Naive thymus-derived CD4-positive, alpha-beta T cell (primary cell): ENCODE measurements at regions of chr2 and their contacts with region 1.

Region 1: GRCh38 chr2:61854474-61855182 is 768 bp upstream of the FAM161A start:
- DNase-seq: peak; percentile 61 to 96 (median 94)
- ATAC-seq: peak; percentile 95
- H3K4me3 ChIP-seq: peak overlapping the region; percentile 100
- H3K4me3 Mint-ChIP-seq: peak overlapping the region; percentile 92 to 99 (median 96)
- H3K27ac ChIP-seq: peak overlapping the region; percentile 77
- H3K27ac Mint-ChIP-seq: peak overlapping the region; percentile 90 to 98 (median 95)
- H3K4me1 ChIP-seq: peaks cover 4 to 6% of the 10 kb centered on the region in 2 donors
- H3K4me1 Mint-ChIP-seq: peaks cover 10 to 27% (median 17%) of the 10 kb centered on the region in 7 donors
- H3K27me3 ChIP-seq: no peaks in the 10 kb centered on the region
- H3K27me3 Mint-ChIP-seq: no peaks in the 10 kb centered on the region

Region 2: DNA sequence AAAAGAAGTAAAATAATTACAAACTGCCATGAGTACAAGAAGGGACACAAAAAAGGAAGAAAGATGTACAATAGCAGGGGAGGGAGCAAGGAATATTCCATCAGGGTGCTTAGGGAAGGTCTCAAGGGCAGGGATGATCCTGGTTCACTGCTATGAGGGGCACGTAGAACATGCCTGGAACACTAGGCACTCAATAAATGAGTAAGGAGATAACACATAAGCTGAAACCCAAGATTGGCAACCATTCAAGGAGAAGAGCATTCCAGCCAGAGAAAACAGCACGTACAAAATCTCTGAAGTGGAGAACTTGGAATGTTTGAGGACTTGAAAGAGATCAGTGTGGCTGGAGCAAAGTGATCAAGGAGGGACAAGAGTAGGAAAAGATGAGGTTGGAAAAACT is 104.0 kb before region 1 on chr2:
- CTCF ChIA-PET with region 1: no interaction called
- POLR2A ChIA-PET with region 1: no interaction called
- intact Hi-C with region 1: no loop called
- DNase-seq: no peak
- ATAC-seq: no peak
- H3K4me3 ChIP-seq: no peak overlapping the region
- H3K4me3 Mint-ChIP-seq: no peak overlapping the region
- H3K27ac ChIP-seq: no peak overlapping the region
- H3K27ac Mint-ChIP-seq: no peak overlapping the region
- H3K4me1 ChIP-seq: no peaks in the 10 kb centered on the region
- H3K4me1 Mint-ChIP-seq: peaks cover 0 to 4% (median 0%) of the 10 kb centered on the region in 7 donors
- H3K27me3 ChIP-seq: no peaks in the 10 kb centered on the region
- H3K27me3 Mint-ChIP-seq: peaks cover 0 to 4% (median 4%) of the 10 kb centered on the region in 5 donors

Region 3: GRCh38 chr2:61905372-61906185 is 51.0 kb after region 1 on chr2 and contains the start of gene COMMD1:
- CTCF ChIA-PET with region 1: interaction called, 3 read pairs
- POLR2A ChIA-PET with region 1: interaction called, 6 read pairs
- intact Hi-C with region 1: loop called (anchors 1 to 5 kb)
- DNase-seq: peak; percentile 64 to 81 (median 76)
- ATAC-seq: peak; percentile 99
- H3K4me3 ChIP-seq: peak within 1 kb of the TSS; percentile 76
- H3K4me3 Mint-ChIP-seq: peak within 1 kb of the TSS; percentile 95 to 98 (median 96)
- H3K27ac ChIP-seq: peak within 1 kb of the TSS; percentile 83
- H3K27ac Mint-ChIP-seq: peak within 1 kb of the TSS; percentile 80 to 97 (median 86)
- H3K4me1 ChIP-seq: peaks cover 0 to 12% of the 10 kb centered on the region in 2 donors
- H3K4me1 Mint-ChIP-seq: peaks cover 14 to 42% (median 30%) of the 10 kb centered on the region in 7 donors
- H3K27me3 ChIP-seq: no peaks in the 10 kb centered on the region
- H3K27me3 Mint-ChIP-seq: no peaks in the 10 kb centered on the region
- total RNA-seq, gene COMMD1: 15.6 to 28.3 (median 20.8) TPM

Region 4: GRCh38 chr2:61928826-61929461 is 74.3 kb after region 1 on chr2:
- CTCF ChIA-PET with region 1: no interaction called
- POLR2A ChIA-PET with region 1: no interaction called
- intact Hi-C with region 1: no loop called
- DNase-seq: no peak
- ATAC-seq: no peak
- H3K4me3 ChIP-seq: no peak overlapping the region
- H3K4me3 Mint-ChIP-seq: no peak overlapping the region
- H3K27ac ChIP-seq: no peak overlapping the region
- H3K27ac Mint-ChIP-seq: no peak overlapping the region
- H3K4me1 ChIP-seq: no peaks in the 10 kb centered on the region
- H3K4me1 Mint-ChIP-seq: peaks cover 0 to 6% (median 0%) of the 10 kb centered on the region in 7 donors
- H3K27me3 ChIP-seq: no peaks in the 10 kb centered on the region
- H3K27me3 Mint-ChIP-seq: no peaks in the 10 kb centered on the region